ENCODE measurements at regions of chr9 and their contacts with region 1.

Region 1: GRCh38 chr9:37592108-37592951 is at the start of gene TOMM5:
- DNase-seq: peak; percentile 68
- H3K4me3 ChIP-seq: peak within 1 kb of the TSS; percentile 66 to 98 (median 88)
- H3K27ac ChIP-seq: peak within 1 kb of the TSS; percentile 80 to 91 (median 88)
- H3K4me1 ChIP-seq: peaks cover 7 to 41% (median 36%) of the 10 kb centered on the region in 3 donors
- H3K27me3 ChIP-seq: no peaks in the 10 kb centered on the region
- CTCF ChIP-seq: peak in 2 of 6 experiments; percentile 6 to 27
- POLR2A ChIP-seq: peak in 3 of 4 donors; percentile 49 to 84 (median 70)
- total RNA-seq, gene TOMM5: 25.1 to 129 (median 105) TPM

Region 2: DNA sequence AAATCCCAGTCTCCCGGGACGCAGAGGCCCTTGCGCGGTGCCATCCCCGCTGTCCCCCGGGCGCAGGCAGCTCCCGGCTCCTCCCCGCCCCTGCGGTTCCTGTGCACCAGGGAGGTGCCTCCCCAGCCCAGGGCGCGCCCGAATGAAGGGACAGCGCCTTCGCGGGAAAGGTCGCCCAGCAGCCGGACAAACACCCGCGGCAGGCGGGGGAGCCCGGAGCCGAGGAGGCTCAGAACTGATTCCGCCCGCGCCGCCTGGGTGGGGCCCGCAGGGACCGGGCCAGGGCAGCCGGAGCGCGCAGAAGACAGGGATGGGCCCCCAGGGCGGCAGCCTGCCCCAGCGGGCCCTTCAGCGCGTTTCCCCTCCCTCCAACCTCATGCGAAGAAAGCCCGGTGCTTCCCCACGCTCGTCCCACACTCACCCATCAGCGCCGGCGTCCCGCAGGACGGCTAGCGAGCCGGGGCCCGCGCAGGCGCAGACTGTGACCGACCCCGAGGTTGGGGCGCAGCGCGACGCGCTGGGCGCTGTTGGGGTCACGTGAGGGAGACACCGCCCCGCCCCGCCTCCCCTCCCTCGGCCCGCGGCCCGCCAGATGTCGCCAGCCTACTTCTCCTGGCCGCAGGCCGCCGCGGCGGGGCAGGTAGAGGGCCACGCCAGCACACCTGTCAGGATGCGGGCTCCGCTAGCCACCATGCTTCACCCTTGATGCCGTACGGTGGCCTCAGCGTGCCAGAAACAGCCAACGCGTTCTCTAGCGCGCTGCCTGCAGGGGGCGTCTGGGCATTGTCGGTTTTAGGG is 311.5 kb after region 1 on chr9 and contains the start of gene SLC25A51:
- intact Hi-C with region 1: loop called (anchors 10 kb)
- DNase-seq: peak; percentile 55
- H3K4me3 ChIP-seq: peak within 1 kb of the TSS; percentile 53 to 86 (median 78)
- H3K27ac ChIP-seq: peak within 1 kb of the TSS; percentile 80 to 93 (median 90)
- H3K4me1 ChIP-seq: peaks cover 7 to 33% (median 15%) of the 10 kb centered on the region in 3 donors
- H3K27me3 ChIP-seq: no peaks in the 10 kb centered on the region
- CTCF ChIP-seq: peak; percentile 84 to 97 (median 94)
- POLR2A ChIP-seq: peak in 2 of 4 donors; percentile 48 to 77
- total RNA-seq, gene SLC25A51: 18.2 to 30.3 (median 20.3) TPM